Calu3 (cell line): ENCODE measurements at regions of chr1 and their contacts with region 1.

Region 1: DNA sequence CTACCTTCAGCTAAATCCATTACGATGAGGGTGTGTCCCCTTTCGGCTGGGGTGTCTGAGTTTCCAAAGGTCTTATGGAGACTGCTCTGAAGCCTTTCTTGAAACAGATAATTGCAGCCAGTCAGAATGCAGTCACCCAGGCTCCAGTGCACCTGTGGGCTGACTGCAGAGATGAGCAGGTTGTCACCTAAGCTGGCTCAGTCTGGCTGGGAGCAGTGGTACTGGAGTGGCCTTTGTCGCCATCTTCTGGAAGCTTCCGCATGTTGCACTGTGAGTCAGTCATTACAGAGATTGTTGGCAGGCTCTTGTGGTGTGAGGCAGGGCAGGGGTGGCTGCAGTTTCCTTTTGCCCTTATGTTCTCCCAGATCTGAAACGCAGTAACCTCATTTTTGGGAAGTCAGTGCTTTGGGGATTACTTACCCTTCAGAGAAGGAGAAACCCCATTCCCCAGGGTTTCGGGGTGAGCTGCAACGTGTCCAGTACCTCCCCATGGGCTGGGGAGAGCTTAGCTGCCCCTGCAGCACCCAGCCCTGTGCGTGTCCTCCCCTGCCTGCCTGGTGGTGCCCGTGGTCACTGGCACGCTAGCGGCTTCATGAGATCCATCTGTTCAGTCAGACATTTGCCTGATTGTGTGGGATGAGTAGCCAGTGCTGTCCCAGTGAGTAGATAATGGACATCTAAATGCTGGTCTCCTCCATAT is 48.0 kb downstream of the SMYD2 start:
- DNase-seq: peak; percentile 83
- H3K4me3 Mint-ChIP-seq: no peak overlapping the region
- H3K27ac Mint-ChIP-seq: no peak overlapping the region
- H3K4me1 Mint-ChIP-seq: no peaks in the 10 kb centered on the region
- H3K27me3 Mint-ChIP-seq: no peaks in the 10 kb centered on the region
- CTCF ChIP-seq: peak; percentile 88

Region 2: GRCh38 chr1:214213136-214213535 is 115.8 kb before region 1 on chr1:
- CTCF ChIA-PET with region 1: interaction called, 70 read pairs
- intact Hi-C with region 1: loop called (anchors 1 kb)
- DNase-seq: no peak
- H3K4me3 Mint-ChIP-seq: no peak overlapping the region
- H3K27ac Mint-ChIP-seq: no peak overlapping the region
- H3K4me1 Mint-ChIP-seq: peaks cover 38% of the 10 kb centered on the region
- H3K27me3 Mint-ChIP-seq: peaks cover 14% of the 10 kb centered on the region
- CTCF ChIP-seq: no peak

Region 3: GRCh38 chr1:214228976-214229375 is 99.9 kb before region 1 on chr1:
- CTCF ChIA-PET with region 1: no interaction called
- intact Hi-C with region 1: no loop called
- DNase-seq: no peak
- H3K4me3 Mint-ChIP-seq: no peak overlapping the region
- H3K27ac Mint-ChIP-seq: no peak overlapping the region
- H3K4me1 Mint-ChIP-seq: peaks cover 9% of the 10 kb centered on the region
- H3K27me3 Mint-ChIP-seq: peaks cover 31% of the 10 kb centered on the region
- CTCF ChIP-seq: no peak

Region 4: GRCh38 chr1:214261206-214262123 is 67.5 kb before region 1 on chr1:
- CTCF ChIA-PET with region 1: interaction called, 39 read pairs
- intact Hi-C with region 1: loop called (anchors 1 kb)
- DNase-seq: peak; percentile 92
- H3K4me3 Mint-ChIP-seq: no peak overlapping the region
- H3K27ac Mint-ChIP-seq: no peak overlapping the region
- H3K4me1 Mint-ChIP-seq: peaks cover 13% of the 10 kb centered on the region
- H3K27me3 Mint-ChIP-seq: no peaks in the 10 kb centered on the region
- CTCF ChIP-seq: peak; percentile 90

Region 5: GRCh38 chr1:214281021-214281719 is 47.8 kb before region 1 on chr1 and contains the start of gene SMYD2:
- CTCF ChIA-PET with region 1: interaction called, 6 read pairs
- intact Hi-C with region 1: loop called (anchors 5 kb)
- DNase-seq: peak; percentile 82
- H3K4me3 Mint-ChIP-seq: peak within 1 kb of the TSS; percentile 80
- H3K27ac Mint-ChIP-seq: peak within 1 kb of the TSS; percentile 78
- H3K4me1 Mint-ChIP-seq: peaks cover 33% of the 10 kb centered on the region
- H3K27me3 Mint-ChIP-seq: no peaks in the 10 kb centered on the region
- CTCF ChIP-seq: no peak
- total RNA-seq, gene SMYD2: 36.1 and 47.5 TPM in 2 replicates

Region 6: GRCh38 chr1:214602764-214603657 is 274.1 kb after region 1 on chr1 and contains the start of gene CENPF:
- CTCF ChIA-PET with region 1: interaction called, 13 read pairs
- intact Hi-C with region 1: no loop called
- DNase-seq: peak; percentile 96
- H3K4me3 Mint-ChIP-seq: peak within 1 kb of the TSS; percentile 87
- H3K27ac Mint-ChIP-seq: peak within 1 kb of the TSS; percentile 85
- H3K4me1 Mint-ChIP-seq: peaks cover 26% of the 10 kb centered on the region
- H3K27me3 Mint-ChIP-seq: no peaks in the 10 kb centered on the region
- CTCF ChIP-seq: no peak
- total RNA-seq, gene CENPF: 118 and 144 TPM in 2 replicates

Region 7: GRCh38 chr1:214632091-214632490 is 303.2 kb after region 1 on chr1:
- CTCF ChIA-PET with region 1: interaction called, 29 read pairs
- intact Hi-C with region 1: loop called (anchors 2 kb)
- DNase-seq: no peak
- H3K4me3 Mint-ChIP-seq: no peak overlapping the region
- H3K27ac Mint-ChIP-seq: no peak overlapping the region
- H3K4me1 Mint-ChIP-seq: no peaks in the 10 kb centered on the region
- H3K27me3 Mint-ChIP-seq: no peaks in the 10 kb centered on the region
- CTCF ChIP-seq: no peak

Region 8: DNA sequence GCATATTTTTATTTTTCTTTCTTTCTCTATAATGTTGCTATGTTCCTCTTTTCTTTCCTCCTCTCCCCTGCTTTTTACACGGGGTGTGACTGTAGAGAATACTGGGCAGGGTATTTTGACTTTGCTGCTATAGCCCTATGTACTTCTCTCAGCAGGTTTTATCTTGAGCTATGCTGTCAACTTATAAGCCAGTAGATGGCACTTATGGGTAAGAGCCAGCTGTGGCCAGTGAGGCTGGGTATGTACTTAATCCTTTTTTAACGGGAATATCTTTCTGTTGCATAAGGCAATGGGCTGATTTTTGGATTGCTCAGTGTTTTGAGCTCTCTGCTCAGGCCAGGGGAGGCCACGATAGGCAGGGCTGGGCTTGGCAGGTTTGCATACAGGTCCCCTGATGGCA is 852.6 kb after region 1 on chr1:
- CTCF ChIA-PET with region 1: no interaction called
- intact Hi-C with region 1: no loop called
- DNase-seq: no peak
- H3K4me3 Mint-ChIP-seq: no peak overlapping the region
- H3K27ac Mint-ChIP-seq: no peak overlapping the region
- H3K4me1 Mint-ChIP-seq: no peaks in the 10 kb centered on the region
- H3K27me3 Mint-ChIP-seq: no peaks in the 10 kb centered on the region
- CTCF ChIP-seq: no peak